ENCODE measurements at regions of chr2 and their contacts with region 1.

Region 1: DNA sequence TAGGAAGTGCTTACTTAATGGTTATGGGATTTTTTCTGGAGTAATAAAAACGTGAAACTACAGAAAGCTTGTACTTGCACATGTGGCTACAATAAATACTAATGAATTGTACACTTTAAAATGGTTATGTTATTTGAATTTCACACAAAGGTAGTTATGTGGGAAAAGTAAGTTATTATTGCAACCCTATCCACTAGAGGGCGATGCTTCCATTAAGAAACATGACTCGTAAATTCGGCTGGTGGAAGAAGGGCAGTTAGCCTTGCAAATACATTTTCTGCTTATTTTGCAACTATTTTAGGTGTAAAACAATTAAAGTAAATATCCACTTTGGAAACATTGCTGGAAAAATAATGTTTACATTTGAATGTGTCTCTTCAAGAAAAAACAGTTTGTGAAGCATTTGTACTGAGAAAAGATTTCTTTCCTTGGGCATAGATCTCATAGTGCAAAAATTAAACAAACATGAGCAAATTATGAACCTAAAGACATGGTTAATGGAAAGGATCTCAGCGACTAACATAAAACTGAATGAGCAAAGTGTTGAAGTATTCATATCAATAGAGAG is 68.1 kb upstream of the CSRNP3 start:
- DNase-seq: no peak
- H3K4me3 ChIP-seq: no peak overlapping the region
- H3K27ac ChIP-seq: no peak overlapping the region
- H3K4me1 ChIP-seq: no peaks in the 10 kb centered on the region
- H3K27me3 ChIP-seq: no peaks in the 10 kb centered on the region
- CTCF ChIP-seq: peak; percentile 52 to 69 (median 66)

Region 2: GRCh38 chr2:165505514-165505913 is 104.1 kb after region 1 on chr2:
- intact Hi-C with region 1: no loop called
- DNase-seq: no peak
- H3K4me3 ChIP-seq: no peak overlapping the region
- H3K27ac ChIP-seq: no peak overlapping the region
- H3K4me1 ChIP-seq: no peaks in the 10 kb centered on the region
- H3K27me3 ChIP-seq: no peaks in the 10 kb centered on the region
- CTCF ChIP-seq: no peak

Region 3: DNA sequence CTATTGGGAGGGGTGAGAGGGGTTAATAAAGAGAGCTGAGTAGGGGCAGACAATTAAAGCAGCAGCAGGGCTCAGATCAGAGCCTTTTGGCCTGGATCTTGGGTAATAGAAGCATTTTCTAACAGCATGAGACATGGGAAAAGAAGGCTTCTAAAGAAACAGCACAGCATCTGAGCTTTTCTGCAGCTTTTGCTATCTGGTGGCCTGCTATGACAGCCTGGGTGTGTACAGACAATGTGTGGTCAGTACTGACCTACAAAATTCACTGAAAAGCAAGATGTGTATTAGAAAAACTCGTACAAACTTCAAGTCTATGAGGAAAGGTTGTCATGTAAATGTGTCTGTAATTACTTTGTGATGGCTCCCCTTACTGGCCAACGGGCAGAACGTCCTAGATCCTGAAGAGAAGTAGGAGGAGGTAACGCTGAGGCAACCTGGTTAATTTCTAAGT is 297.1 kb after region 1 on chr2:
- intact Hi-C with region 1: loop called (anchors 1 kb)
- DNase-seq: peak in 1 of 2 donors; percentile 69
- H3K4me3 ChIP-seq: no peak overlapping the region
- H3K27ac ChIP-seq: no peak overlapping the region
- H3K4me1 ChIP-seq: peaks cover 0 to 2% of the 10 kb centered on the region in 2 donors
- H3K27me3 ChIP-seq: no peaks in the 10 kb centered on the region
- CTCF ChIP-seq: peak; percentile 25 to 58 (median 48)

Region 4: GRCh38 chr2:165870346-165870745 is 469.0 kb after region 1 on chr2:
- intact Hi-C with region 1: loop called (anchors 2 kb)
- DNase-seq: no peak
- H3K4me3 ChIP-seq: no peak overlapping the region
- H3K27ac ChIP-seq: no peak overlapping the region
- H3K4me1 ChIP-seq: peaks cover 0 to 6% of the 10 kb centered on the region in 2 donors
- H3K27me3 ChIP-seq: no peaks in the 10 kb centered on the region
- CTCF ChIP-seq: no peak

Measured in ascending aorta (tissue), 2 donors.